Dorsolateral prefrontal cortex (tissue), 120 donors: ENCODE measurements at regions of chr16 and their contacts with region 1.

Region 1: GRCh38 chr16:23060458-23061320 is 88.6 kb downstream of the USP31 start:
- DNase-seq: peak; percentile 56 to 94 (median 74)
- H3K4me3 ChIP-seq: no peak overlapping the region
- H3K27ac ChIP-seq: peak overlapping the region in 51 of 59 donors; percentile 10 to 97 (median 89)
- H3K27me3 ChIP-seq: no peaks in the 10 kb centered on the region
- CTCF ChIP-seq: peak; percentile 71 to 96 (median 89)

Region 2: GRCh38 chr16:22898874-22899348 is 161.8 kb before region 1 on chr16:
- intact Hi-C with region 1: loop called (anchors 1 to 2 kb)
- DNase-seq: peak; percentile 52 to 85 (median 82)
- H3K4me3 ChIP-seq: peak overlapping the region in 12 of 59 donors; percentile 8 to 47 (median 28)
- H3K27ac ChIP-seq: peak overlapping the region in 5 of 59 donors; percentile 1 to 50 (median 18)
- H3K27me3 ChIP-seq: peaks cover 0 to 10% (median 0%) of the 10 kb centered on the region in 45 donors
- CTCF ChIP-seq: peak; percentile 76 to 99 (median 94)

Region 3: GRCh38 chr16:22983614-22984013 is 77.1 kb before region 1 on chr16:
- intact Hi-C with region 1: loop called in 1 of 2 experiments (anchors 5 kb)
- DNase-seq: no peak
- H3K4me3 ChIP-seq: no peak overlapping the region
- H3K27ac ChIP-seq: no peak overlapping the region
- H3K27me3 ChIP-seq: no peaks in the 10 kb centered on the region
- CTCF ChIP-seq: no peak

Region 4: GRCh38 chr16:23026784-23027362 is 33.8 kb before region 1 on chr16:
- intact Hi-C with region 1: no loop called
- DNase-seq: no peak
- H3K4me3 ChIP-seq: no peak overlapping the region
- H3K27ac ChIP-seq: no peak overlapping the region
- H3K27me3 ChIP-seq: peaks cover 0 to 2% (median 0%) of the 10 kb centered on the region in 45 donors
- CTCF ChIP-seq: no peak

Region 5: GRCh38 chr16:23119570-23119969 is 58.9 kb after region 1 on chr16:
- intact Hi-C with region 1: no loop called
- DNase-seq: no peak
- H3K4me3 ChIP-seq: no peak overlapping the region
- H3K27ac ChIP-seq: peak overlapping the region in 2 of 59 donors; percentile 2 to 12
- H3K27me3 ChIP-seq: no peaks in the 10 kb centered on the region
- CTCF ChIP-seq: no peak

Region 6: GRCh38 chr16:23131931-23132621 is 71.4 kb after region 1 on chr16:
- intact Hi-C with region 1: loop called in 1 of 2 experiments (anchors 5 kb)
- DNase-seq: peak in 1 of 10 donors; percentile 55
- H3K4me3 ChIP-seq: peak overlapping the region in 48 of 59 donors; percentile 1 to 50 (median 26)
- H3K27ac ChIP-seq: peak overlapping the region; percentile 60 to 97 (median 89)
- H3K27me3 ChIP-seq: no peaks in the 10 kb centered on the region
- CTCF ChIP-seq: peak in 3 of 56 donors; percentile 2 to 34 (median 8)

Region 7: GRCh38 chr16:23149349-23149996 is 88.8 kb after region 1 on chr16 and contains the start of gene USP31:
- intact Hi-C with region 1: loop called in 1 of 2 experiments (anchors 5 kb)
- DNase-seq: peak; percentile 90 to 97 (median 96)
- H3K4me3 ChIP-seq: peak within 1 kb of the TSS; percentile 56 to 95 (median 82)
- H3K27ac ChIP-seq: peak within 1 kb of the TSS; percentile 20 to 93 (median 84)
- H3K27me3 ChIP-seq: no peaks in the 10 kb centered on the region
- CTCF ChIP-seq: peak in 19 of 56 donors; percentile 9 to 39 (median 22)
- total RNA-seq, gene USP31: 41.7 to 92.3 (median 58.4) TPM